MCF 10A (cell line): ENCODE measurements at regions of chr5 and their contacts with region 1.

Region 1: GRCh38 chr5:10283927-10284635 is 23.6 kb downstream of the CMBL start:
- DNase-seq: peak; percentile 79
- H3K4me3 Mint-ChIP-seq: no peak overlapping the region
- H3K27ac Mint-ChIP-seq: no peak overlapping the region
- H3K4me1 Mint-ChIP-seq: peaks cover 16% of the 10 kb centered on the region
- H3K27me3 Mint-ChIP-seq: no peaks in the 10 kb centered on the region
- CTCF ChIP-seq: peak; percentile 93

Region 2: GRCh38 chr5:9958914-9959313 is 325.2 kb before region 1 on chr5:
- CTCF ChIA-PET with region 1: no interaction called
- POLR2A ChIA-PET with region 1: no interaction called
- intact Hi-C with region 1: no loop called
- DNase-seq: no peak
- H3K4me3 Mint-ChIP-seq: no peak overlapping the region
- H3K27ac Mint-ChIP-seq: no peak overlapping the region
- H3K4me1 Mint-ChIP-seq: peaks cover 6% of the 10 kb centered on the region
- H3K27me3 Mint-ChIP-seq: no peaks in the 10 kb centered on the region
- CTCF ChIP-seq: no peak

Region 3: DNA sequence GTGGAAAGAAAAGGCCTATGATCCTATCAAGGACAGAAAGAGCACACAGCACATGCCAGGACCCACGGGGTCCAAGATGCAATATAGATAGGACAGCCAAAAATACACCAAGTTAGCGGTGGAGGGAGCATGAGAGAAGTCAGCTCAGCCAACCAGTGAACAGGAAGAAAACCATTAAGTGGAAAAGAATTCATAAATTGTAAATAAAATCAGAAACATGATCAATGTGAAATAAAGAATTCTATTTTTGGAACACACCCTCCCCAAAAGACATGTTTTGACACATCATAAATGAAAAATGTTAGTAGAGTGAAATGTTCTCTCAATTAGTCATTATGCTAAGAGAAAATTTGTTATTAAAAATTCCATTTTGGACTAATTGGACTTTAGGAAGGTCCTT is 70.0 kb before region 1 on chr5:
- CTCF ChIA-PET with region 1: no interaction called
- POLR2A ChIA-PET with region 1: no interaction called
- intact Hi-C with region 1: no loop called
- DNase-seq: no peak
- H3K4me3 Mint-ChIP-seq: no peak overlapping the region
- H3K27ac Mint-ChIP-seq: no peak overlapping the region
- H3K4me1 Mint-ChIP-seq: no peaks in the 10 kb centered on the region
- H3K27me3 Mint-ChIP-seq: no peaks in the 10 kb centered on the region
- CTCF ChIP-seq: no peak

Region 4: GRCh38 chr5:10295619-10296326 is 11.7 kb after region 1 on chr5:
- CTCF ChIA-PET with region 1: interaction called, 14 read pairs
- POLR2A ChIA-PET with region 1: interaction called, 7 read pairs
- intact Hi-C with region 1: no loop called
- DNase-seq: no peak
- H3K4me3 Mint-ChIP-seq: no peak overlapping the region
- H3K27ac Mint-ChIP-seq: no peak overlapping the region
- H3K4me1 Mint-ChIP-seq: peaks cover 24% of the 10 kb centered on the region
- H3K27me3 Mint-ChIP-seq: no peaks in the 10 kb centered on the region
- CTCF ChIP-seq: no peak

Region 5: DNA sequence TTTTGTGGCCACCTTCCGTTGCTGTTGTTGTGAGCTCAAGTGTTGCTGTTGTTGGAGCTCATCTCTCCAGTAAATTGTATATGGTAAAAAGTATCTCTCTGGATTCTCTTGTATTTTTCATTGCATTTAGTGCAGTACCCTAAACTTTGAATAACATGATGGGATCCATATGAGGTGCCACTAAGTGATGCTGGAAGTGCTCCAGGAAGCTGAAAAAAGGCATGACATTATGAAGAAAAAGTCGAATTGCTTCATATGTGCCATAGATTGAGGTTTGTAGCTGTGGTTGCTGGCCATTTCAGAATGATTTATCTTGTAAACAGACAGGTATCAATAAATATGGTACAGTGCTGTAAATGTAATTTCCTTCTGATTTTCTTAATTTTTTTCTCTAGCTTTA is 74.9 kb after region 1 on chr5:
- CTCF ChIA-PET with region 1: interaction called, 26 read pairs
- POLR2A ChIA-PET with region 1: interaction called, 36 read pairs
- intact Hi-C with region 1: no loop called
- DNase-seq: no peak
- H3K4me3 Mint-ChIP-seq: no peak overlapping the region
- H3K27ac Mint-ChIP-seq: no peak overlapping the region
- H3K4me1 Mint-ChIP-seq: peaks cover 26% of the 10 kb centered on the region
- H3K27me3 Mint-ChIP-seq: no peaks in the 10 kb centered on the region
- CTCF ChIP-seq: no peak

Region 6: DNA sequence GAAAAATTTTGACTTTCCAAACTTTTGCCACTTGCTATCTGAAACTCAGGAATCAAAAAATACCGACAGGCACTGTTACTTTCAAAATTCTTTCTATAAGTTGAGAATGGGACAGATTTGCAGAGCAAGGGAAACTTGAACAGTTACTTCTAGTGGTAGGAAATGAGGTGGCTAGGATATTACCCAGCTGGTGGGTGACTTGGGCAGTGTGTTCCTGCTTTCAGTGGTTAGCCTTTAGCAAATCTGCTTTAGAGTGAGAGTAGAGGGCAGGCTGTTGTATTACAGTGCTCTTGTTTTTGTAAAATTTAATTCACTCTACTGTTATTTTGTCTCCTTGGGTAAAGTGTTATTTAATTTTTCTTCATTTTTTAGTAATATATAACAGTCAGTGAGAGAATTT is 117.4 kb after region 1 on chr5:
- CTCF ChIA-PET with region 1: interaction called, 6 read pairs
- POLR2A ChIA-PET with region 1: no interaction called
- intact Hi-C with region 1: loop called (anchors 1 kb)
- DNase-seq: no peak
- H3K4me3 Mint-ChIP-seq: no peak overlapping the region
- H3K27ac Mint-ChIP-seq: peak overlapping the region; percentile 19
- H3K4me1 Mint-ChIP-seq: no peaks in the 10 kb centered on the region
- H3K27me3 Mint-ChIP-seq: no peaks in the 10 kb centered on the region
- CTCF ChIP-seq: no peak

Region 7: GRCh38 chr5:10441083-10441991 is 157.3 kb after region 1 on chr5 and contains the start of gene ROPN1L:
- CTCF ChIA-PET with region 1: no interaction called
- POLR2A ChIA-PET with region 1: no interaction called
- intact Hi-C with region 1: loop called (anchors 5 kb)
- DNase-seq: peak; percentile 87
- H3K4me3 Mint-ChIP-seq: peak within 1 kb of the TSS; percentile 74
- H3K27ac Mint-ChIP-seq: no peak within 1 kb of the TSS
- H3K4me1 Mint-ChIP-seq: no peaks in the 10 kb centered on the region
- H3K27me3 Mint-ChIP-seq: no peaks in the 10 kb centered on the region
- CTCF ChIP-seq: no peak
- total RNA-seq, gene ROPN1L: 0.82 TPM in 1 of 2 replicates, not detected in the other

Region 8: DNA sequence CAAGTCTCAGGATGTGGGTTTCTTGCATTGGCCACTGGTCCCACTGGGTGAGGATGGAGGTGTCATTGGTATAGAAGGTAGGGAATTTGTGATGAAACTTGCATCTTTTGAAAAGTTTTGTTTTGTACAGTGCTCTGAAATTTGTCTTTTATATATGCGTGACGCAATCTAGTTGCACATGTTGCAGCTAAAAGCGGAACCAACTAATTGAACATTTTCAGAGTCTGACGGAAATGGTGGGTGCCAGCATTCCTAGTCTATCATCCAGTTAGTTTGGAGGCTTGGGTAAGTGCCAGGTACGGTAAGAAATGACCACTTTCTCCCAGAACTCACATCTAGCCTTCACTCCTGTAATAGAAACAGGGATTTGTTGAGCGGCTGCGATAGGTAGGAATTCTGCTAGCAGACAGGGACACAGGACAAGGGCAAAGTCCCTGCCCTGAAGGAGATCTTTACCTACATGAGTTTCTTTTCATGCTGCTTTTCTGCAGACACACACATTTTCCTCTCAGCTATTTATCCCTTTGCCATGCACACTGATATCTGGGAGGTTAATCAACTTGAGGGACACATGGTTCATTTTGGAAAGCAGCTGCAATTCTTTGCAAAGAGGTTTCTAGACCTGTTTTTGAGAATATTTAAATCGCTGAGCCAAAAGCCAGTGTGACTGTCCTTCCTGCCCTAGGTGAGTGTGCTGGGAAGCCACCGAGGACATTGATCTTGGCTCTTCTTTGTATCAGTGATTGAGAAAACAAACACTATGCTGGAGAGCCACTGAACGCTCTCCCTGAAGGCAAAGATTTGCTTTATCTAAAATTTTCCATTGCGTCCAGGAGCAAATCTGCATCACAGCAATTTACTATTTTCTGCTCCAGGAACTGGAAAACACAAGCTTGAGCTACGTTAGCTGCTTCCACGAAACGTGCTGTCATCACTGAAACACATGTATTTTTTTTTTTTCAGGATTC is 387.2 kb after region 1 on chr5:
- CTCF ChIA-PET with region 1: no interaction called
- POLR2A ChIA-PET with region 1: no interaction called
- intact Hi-C with region 1: no loop called
- DNase-seq: no peak
- H3K4me3 Mint-ChIP-seq: no peak overlapping the region
- H3K27ac Mint-ChIP-seq: no peak overlapping the region
- H3K4me1 Mint-ChIP-seq: no peaks in the 10 kb centered on the region
- H3K27me3 Mint-ChIP-seq: no peaks in the 10 kb centered on the region
- CTCF ChIP-seq: no peak

Region 9: DNA sequence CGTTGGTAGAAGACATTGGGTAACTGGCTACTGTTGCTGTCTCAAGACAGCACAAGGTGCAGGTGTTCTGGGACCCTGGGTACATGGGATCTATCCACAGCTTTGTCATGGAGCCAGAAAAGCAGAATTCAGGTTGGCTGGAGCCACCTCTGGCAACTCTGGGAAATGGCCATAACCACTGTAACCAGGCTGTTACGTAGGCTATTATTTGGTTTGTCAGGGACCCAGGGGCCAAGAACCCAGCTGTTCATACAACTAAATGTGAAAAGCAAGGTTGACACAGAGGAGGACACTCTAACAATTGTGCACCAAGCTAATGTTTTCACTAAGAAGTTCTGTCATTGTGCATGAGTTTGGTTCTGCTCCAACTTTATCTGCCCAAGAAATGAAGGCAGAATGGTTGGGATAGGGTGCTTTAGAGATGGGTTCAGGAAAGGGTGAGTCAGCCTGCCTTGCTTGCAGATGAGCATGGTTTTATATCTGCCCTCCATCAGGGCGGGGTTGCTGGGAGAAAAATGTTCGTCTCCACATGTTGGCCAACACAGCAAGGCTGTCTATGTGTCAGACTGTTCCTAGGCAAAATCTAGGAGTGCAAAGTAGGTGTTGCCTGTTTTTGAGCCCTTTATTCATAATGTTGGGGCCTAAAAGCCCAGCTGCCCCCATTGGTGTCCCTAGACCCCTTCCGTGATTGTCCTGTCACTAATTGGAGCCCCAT is 608.2 kb after region 1 on chr5:
- CTCF ChIA-PET with region 1: no interaction called
- POLR2A ChIA-PET with region 1: no interaction called
- intact Hi-C with region 1: no loop called
- DNase-seq: no peak
- H3K4me3 Mint-ChIP-seq: no peak overlapping the region
- H3K27ac Mint-ChIP-seq: no peak overlapping the region
- H3K4me1 Mint-ChIP-seq: peaks cover 12% of the 10 kb centered on the region
- H3K27me3 Mint-ChIP-seq: peaks cover 2% of the 10 kb centered on the region
- CTCF ChIP-seq: no peak